AG04449 (cell line): ENCODE measurements at regions of chr22 and their contacts with region 1.

Region 1: DNA sequence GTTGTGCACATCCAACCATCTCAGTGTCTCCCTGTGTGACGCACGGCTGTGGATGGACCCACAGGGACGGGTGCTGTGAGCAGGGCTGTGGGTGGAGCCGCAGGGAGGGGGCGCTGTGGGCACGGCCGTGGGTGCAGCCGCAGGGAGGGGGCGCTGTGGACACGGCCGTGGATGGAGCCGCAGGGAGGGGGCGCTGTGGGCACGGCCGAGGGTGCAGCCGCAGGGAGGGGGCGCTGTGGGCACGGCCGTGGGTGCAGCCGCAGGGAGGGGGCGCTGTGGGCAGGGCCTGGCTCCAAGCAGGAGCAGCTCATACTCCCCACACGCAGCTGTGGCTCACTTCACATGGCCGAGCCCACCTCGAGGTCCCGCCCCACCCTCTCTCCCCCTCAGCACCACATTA is 6.0 kb upstream of the MAPK11 start:
- DNase-seq: no peak
- H3K4me3 ChIP-seq: no peak overlapping the region
- CTCF ChIP-seq: peak; percentile 74

Region 2: GRCh38 chr22:50293441-50294318 is 17.5 kb after region 1 on chr22:
- CTCF ChIA-PET with region 1: interaction called, 13 read pairs
- POLR2A ChIA-PET with region 1: interaction called, 3 read pairs
- DNase-seq: no peak
- H3K4me3 ChIP-seq: peak overlapping the region; percentile 50
- CTCF ChIP-seq: no peak

Region 3: GRCh38 chr22:50306753-50307749 is 30.9 kb after region 1 on chr22 and contains the start of gene PLXNB2:
- CTCF ChIA-PET with region 1: interaction called, 10 read pairs
- POLR2A ChIA-PET with region 1: interaction called, 3 read pairs
- DNase-seq: no peak
- H3K4me3 ChIP-seq: peak within 1 kb of the TSS; percentile 89
- CTCF ChIP-seq: no peak

Region 4: GRCh38 chr22:50318698-50319411 is 42.7 kb after region 1 on chr22:
- CTCF ChIA-PET with region 1: interaction called, 12 read pairs
- POLR2A ChIA-PET with region 1: no interaction called
- DNase-seq: no peak
- H3K4me3 ChIP-seq: no peak overlapping the region
- CTCF ChIP-seq: no peak

Region 5: GRCh38 chr22:50326959-50327710 is 51.0 kb after region 1 on chr22 and contains the start of gene DENND6B:
- CTCF ChIA-PET with region 1: interaction called, 49 read pairs
- POLR2A ChIA-PET with region 1: interaction called, 3 read pairs
- DNase-seq: no peak
- H3K4me3 ChIP-seq: peak within 1 kb of the TSS; percentile 66
- CTCF ChIP-seq: peak; percentile 15